Transverse colon (tissue), 4 donors: ENCODE measurements at regions of chr9 and their contacts with region 1.

Region 1: DNA sequence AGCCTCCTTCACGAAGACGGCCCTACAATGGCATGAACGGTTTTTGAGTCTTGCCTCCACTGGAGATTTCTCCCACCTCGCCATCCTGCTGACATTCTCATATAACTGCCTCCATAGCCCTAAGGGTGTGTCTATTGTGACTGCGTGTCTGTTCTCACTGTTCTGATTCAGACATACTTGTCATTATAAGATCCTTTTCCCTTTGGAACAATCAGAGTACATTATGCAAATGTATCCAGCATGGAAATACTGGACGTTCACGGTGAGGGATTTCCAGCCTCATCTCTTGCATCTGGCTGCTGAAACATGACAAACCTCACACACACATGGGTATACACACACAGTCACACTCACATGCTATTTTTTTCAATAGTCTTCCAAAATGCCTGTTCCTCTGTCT is 402.1 kb downstream of the DIRAS2 start:
- DNase-seq: no peak
- H3K4me3 ChIP-seq: no peak overlapping the region
- H3K27ac ChIP-seq: no peak overlapping the region
- H3K4me1 ChIP-seq: no peaks in the 10 kb centered on the region
- H3K27me3 ChIP-seq: no peaks in the 10 kb centered on the region
- CTCF ChIP-seq: no peak
- EP300 ChIP-seq: no peak
- POLR2A ChIP-seq: no peak

Region 2: GRCh38 chr9:89839449-89839848 is 401.1 kb before region 1 on chr9:
- in situ Hi-C with region 1: no loop called
- intact Hi-C with region 1: no loop called
- DNase-seq: no peak
- H3K4me3 ChIP-seq: no peak overlapping the region
- H3K27ac ChIP-seq: peak overlapping the region in 1 of 4 donors; percentile 6
- H3K4me1 ChIP-seq: peaks cover 0 to 40% (median 7%) of the 10 kb centered on the region in 4 donors
- H3K27me3 ChIP-seq: no peaks in the 10 kb centered on the region
- CTCF ChIP-seq: no peak
- EP300 ChIP-seq: no peak
- POLR2A ChIP-seq: no peak

Region 3: GRCh38 chr9:90773617-90774016 is 533.1 kb after region 1 on chr9:
- in situ Hi-C with region 1: loop called in 1 of 4 experiments (anchors 25 kb)
- intact Hi-C with region 1: no loop called
- DNase-seq: peak; percentile 26
- H3K4me3 ChIP-seq: no peak overlapping the region
- H3K27ac ChIP-seq: no peak overlapping the region
- H3K4me1 ChIP-seq: no peaks in the 10 kb centered on the region
- H3K27me3 ChIP-seq: no peaks in the 10 kb centered on the region
- CTCF ChIP-seq: peak; percentile 7 to 31 (median 29)
- EP300 ChIP-seq: no peak
- POLR2A ChIP-seq: no peak

Region 4: DNA sequence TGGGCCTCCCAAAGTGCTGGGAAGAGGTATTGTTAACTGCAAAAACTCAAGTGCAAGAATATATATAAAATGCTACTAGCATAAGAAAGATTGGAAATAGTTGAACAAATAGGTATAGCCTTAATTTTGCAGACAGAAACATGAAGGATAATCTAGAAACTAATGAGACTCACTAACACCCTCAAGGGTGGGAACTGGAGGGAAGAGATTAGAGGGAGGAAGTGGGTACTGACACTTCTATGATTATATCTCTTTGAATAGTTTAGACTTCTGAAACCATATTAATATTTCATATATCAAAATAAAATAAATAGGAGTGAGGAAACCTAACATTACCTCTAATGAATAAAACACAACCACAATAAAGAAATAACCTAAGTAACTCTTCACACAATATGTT is 1098.1 kb after region 1 on chr9:
- in situ Hi-C with region 1: no loop called
- intact Hi-C with region 1: loop called (anchors 5 kb)
- DNase-seq: no peak
- H3K4me3 ChIP-seq: no peak overlapping the region
- H3K27ac ChIP-seq: no peak overlapping the region
- H3K4me1 ChIP-seq: no peaks in the 10 kb centered on the region
- H3K27me3 ChIP-seq: no peaks in the 10 kb centered on the region
- CTCF ChIP-seq: no peak
- EP300 ChIP-seq: no peak
- POLR2A ChIP-seq: no peak